Left ventricle myocardium superior (tissue), 1 donor: ENCODE measurements at regions of chr6 and their contacts with region 1.

Region 1: DNA sequence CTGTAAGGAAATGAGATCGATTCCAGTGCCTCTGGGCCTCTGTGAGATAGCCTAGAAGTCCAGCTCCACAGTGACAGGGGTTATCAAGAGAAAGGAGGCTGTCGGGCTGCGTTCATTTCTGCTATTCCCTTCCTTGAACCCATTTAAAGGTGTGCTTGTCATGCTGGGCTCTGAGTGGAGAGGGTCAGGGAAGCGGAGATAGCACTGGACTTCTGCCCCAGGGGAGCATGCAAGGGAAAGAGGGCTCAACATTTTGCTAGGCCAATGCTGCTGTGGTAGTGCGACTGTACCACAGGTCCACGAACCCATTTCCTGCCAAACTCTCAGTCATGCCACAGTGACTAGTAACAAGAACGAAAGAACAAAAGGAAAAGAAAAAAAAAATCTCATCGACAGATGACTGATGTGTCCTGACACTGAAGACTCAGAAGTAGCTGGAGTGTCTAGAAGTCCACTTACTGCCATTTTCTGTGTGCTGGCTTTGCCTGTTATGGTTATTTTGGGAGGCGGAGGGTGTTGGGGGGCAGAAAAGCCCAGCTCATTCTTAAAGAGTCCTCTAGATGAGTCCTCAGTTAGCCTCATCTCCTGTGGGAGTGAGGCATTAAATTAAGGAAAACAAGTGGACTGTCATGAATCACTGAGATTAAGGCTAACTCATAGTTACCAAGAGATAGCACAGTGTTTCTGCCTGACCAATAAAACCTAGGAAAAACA is 8.1 kb downstream of the NEDD9 start:
- DNase-seq: no peak
- ATAC-seq: no peak

Region 2: DNA sequence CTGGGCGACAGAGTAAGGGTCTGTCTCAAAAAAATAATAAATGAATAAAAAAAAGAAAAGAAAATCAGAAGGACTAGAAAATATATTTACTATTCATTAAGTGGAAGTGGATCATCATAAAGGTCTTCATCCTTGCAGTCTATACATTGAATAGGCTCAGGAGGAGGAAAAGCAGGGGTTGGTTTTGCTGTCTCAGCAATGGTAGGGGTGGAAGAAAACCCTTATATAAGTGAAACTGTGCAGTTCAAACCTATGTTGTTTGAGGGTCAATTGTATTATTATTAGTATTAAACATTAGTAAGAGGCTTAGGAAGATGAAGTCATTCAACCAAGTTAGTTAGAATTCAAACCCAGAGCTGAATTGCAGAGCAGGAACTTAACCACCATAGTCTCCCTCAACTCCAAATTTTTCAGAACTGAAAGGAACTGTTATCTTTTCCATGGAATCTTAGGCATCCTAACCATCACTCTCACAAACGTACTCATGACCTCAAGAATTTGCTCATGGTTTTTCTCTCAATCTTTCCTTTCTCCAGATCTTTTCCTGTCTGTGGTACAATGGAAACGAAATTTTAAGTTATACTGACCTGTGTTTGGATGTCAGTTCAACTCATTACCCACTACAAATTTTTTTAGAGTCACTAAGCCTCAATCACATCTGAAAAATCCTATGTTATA is 138.5 kb before region 1 on chr6:
- intact Hi-C with region 1: no loop called
- DNase-seq: no peak
- ATAC-seq: no peak

Region 3: DNA sequence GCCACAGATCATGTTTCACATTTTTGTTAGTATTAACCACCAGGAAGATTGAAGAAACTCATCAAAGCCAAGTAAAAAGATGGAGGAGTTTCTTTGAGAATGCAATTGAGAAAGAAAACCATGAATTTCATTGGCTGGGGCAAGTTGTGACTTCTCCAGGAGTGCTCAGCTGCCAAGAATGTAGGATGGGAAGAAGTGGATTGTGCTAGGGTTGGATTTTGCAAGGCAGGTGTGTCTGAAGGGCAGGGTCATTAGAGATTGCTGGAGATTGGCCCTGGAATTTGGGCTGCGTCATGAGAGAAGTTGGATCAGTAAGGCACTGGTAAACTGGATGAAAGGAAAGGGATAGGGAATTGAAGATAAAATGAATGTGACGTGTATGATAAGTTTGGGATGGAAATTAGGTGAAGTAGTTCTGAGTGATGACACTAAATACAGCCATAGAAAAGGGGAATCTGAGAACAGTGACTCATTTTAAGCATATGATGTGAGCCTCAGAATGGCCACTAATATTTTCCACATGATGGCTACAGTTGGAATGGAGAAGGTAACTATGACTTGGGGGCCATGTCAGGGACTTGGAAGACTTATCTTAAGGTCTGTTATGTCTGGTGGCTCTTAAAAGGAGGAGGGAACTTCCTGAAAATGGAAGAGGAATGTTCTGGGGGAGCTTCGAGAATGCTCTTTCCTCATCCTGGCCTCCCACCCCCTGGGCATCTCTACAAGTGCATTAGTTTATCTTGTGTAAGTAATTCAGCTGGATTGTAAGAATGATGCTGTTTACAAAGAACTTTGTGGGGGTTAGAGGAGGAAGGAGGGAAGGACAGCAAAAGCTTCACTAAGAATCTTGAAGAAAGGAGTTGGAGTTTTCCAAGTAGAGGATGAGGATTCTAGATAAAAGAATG is 85.1 kb before region 1 on chr6:
- intact Hi-C with region 1: no loop called
- DNase-seq: no peak
- ATAC-seq: no peak

Region 4: DNA sequence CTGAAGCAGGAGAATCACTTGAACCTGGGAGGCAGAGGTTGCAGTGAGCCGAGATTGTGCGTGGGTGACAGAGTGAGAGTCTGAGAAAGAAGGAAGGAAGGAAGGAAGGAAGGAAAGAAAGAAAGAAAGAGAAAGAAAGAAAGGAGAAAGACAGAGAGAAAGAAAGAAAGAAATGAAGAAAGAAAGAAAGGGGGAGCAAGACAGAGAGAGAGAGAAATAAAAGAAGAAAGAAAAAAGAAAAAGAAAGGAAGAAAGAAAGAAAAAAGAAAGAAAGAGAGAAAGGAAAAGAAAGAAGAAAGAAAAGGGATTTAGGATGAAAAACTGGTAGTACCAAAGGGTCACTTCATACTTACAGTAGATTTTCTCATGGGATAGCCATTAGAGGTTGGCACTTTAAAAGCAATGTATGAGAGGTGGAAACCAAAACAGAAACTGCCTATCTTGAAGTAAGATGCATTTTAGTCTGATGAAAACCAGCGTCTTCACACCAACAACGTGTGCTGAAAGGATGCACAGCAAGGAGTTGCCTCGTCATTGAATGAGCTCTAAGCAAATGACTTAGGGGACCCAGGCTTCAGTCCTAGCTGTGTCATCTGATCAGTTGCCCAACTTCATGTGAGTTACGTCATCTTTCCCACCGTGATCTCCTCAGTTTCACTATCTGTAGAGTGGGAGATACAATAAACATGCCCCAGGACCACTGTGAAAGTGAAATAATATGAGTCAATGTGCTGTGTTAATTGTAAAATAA is 141.9 kb after region 1 on chr6:
- intact Hi-C with region 1: loop called (anchors 10 kb)
- DNase-seq: no peak
- ATAC-seq: no peak